ENCODE measurements at regions of chr13 and their contacts with region 1.

Region 1: GRCh38 chr13:99656092-99656745 is 154.9 kb downstream of the TM9SF2 start:
- DNase-seq: peak; percentile 74
- H3K4me3 Mint-ChIP-seq: peak overlapping the region; percentile 57
- H3K27ac Mint-ChIP-seq: peak overlapping the region; percentile 9
- H3K4me1 Mint-ChIP-seq: peaks cover 44% of the 10 kb centered on the region
- H3K27me3 Mint-ChIP-seq: peaks cover 23% of the 10 kb centered on the region

Region 2: DNA sequence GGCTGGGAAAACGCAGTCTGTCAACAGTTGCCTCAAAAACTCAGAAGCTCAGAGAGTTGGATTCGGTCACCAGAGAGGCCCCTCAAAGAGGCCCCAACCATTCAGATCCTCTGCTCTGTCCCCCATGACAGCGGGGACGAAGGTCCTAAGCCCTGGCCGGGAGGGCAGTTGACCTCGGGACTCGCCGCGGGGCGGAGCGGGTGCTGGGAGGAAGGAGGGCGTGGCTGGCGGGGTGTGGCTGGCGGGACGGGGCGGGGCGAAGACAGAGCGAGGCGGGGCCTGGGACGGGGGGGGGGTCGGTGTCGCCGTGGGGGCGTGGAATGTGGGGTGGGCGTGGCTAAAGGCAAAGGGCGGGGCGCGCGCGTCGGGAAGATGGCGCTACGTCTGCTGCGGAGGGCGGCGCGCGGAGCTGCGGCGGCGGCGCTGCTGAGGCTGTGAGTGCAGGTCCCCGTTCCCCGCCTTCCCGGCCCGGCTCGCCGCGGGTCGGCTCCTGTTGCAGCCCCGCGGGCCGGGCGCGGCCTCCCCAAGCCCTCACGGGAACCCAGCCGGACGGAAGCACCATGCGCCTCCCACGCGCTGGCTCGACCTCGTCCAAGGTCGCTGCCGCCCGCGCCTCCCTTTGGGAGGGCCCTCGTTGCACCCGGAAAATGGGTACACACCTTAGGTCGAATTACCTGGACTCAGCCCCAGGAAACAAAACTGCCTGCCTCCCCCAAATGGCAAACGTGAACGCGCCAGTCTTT is 49.7 kb before region 1 on chr13:
- intact Hi-C with region 1: loop called (anchors 1 kb)
- DNase-seq: peak; percentile 82
- H3K4me3 Mint-ChIP-seq: peak within 1 kb of the TSS; percentile 89
- H3K27ac Mint-ChIP-seq: peak within 1 kb of the TSS; percentile 81
- H3K4me1 Mint-ChIP-seq: peaks cover 29% of the 10 kb centered on the region
- H3K27me3 Mint-ChIP-seq: peaks cover 4% of the 10 kb centered on the region

Region 3: DNA sequence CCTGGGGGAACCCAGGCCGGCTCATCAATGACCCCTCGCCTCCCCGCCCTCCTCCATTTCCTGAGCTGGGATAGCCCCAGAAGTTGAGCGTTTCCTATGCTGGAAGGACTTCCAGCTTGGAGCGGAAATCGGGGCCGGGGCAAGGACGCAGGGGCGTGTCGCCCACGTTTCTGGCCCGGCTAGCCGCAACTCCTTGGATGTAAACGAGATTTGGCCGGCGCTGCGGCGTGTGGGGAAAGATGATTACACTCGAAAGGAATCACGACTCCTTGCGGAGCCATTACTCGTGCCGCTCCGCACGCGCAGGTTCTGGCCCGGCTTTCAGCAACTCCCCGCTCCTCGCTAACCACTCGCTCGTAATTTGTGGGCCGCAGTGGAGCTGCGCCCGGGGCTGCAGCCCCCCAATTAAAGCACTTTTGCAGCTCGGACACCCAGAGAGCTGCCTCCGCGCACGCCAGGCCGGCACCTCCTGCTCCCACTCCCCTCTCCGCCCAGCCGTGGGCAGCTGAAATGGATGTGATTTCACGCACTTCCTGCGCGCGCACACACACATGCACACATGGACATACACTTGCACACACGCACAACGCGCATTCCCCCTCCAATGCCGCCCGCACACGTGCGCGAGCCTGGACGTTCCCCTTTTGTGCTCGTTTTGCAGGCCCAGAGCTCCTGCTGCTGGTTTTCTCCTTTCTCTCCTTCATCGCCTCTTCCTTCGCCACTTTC is 299.7 kb after region 1 on chr13:
- intact Hi-C with region 1: loop called (anchors 5 kb)
- DNase-seq: no peak
- H3K4me3 Mint-ChIP-seq: no peak overlapping the region
- H3K27ac Mint-ChIP-seq: peak overlapping the region; percentile 72
- H3K4me1 Mint-ChIP-seq: peaks cover 5% of the 10 kb centered on the region
- H3K27me3 Mint-ChIP-seq: peaks cover 78% of the 10 kb centered on the region

Region 4: DNA sequence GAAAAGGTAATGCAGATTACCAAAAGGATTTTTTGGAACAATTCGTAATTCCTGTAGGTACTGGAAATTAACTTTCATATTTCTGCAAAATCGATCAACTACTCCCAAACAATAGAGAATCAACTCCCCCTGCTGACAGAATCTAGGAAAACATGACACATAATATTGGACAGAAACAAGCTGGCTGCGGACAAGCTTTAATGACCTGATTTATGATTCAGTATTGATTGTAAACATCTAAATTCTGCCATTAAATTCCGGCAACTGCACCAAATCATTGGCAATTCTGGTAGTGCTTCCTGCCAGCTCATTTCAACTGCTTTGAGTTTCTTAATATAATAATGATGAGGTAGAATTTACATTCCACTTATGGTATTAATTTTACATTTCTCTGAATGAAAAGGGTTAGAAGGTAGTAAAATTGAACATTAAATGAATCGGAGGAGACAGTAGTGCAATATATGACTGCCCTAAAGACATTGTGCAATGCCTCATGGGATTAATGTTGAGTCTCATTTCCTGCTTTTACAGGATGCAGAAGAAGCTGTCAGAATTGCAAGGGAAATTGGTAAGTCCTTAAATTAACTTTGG is 579.2 kb after region 1 on chr13:
- intact Hi-C with region 1: loop called (anchors 1 kb)
- DNase-seq: no peak
- H3K4me3 Mint-ChIP-seq: no peak overlapping the region
- H3K27ac Mint-ChIP-seq: no peak overlapping the region
- H3K4me1 Mint-ChIP-seq: peaks cover 15% of the 10 kb centered on the region
- H3K27me3 Mint-ChIP-seq: no peaks in the 10 kb centered on the region

Region 5: DNA sequence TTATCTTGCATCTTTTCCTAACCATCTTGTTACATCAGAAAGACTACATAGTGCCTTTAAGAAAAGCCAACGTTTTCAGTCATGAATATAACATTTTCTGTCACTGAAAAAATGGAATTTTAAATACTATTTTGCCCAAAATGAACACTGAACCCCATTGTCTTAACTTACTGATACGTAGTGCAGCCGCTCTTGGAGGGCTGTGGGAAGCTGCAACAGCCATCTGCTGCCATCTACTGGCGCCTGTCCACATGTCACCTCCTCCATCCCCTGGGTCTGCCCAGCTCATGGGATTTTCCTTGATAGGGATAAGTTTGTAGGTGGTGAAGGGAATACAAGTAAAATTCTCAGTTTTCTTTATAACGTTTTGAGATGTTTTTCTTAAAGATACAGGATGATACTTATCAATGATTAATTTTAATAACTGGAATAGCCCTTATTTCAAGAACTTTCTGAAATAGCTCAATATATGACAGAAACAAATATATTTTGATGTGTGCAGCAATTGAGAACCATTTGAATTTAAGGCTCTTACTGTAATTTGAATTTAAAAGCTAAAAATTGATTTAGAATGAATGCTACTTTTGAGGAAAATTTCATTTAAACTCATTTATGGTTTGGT is 858.7 kb after region 1 on chr13:
- intact Hi-C with region 1: loop called (anchors 1 kb)
- DNase-seq: peak; percentile 52
- H3K4me3 Mint-ChIP-seq: no peak overlapping the region
- H3K27ac Mint-ChIP-seq: no peak overlapping the region
- H3K4me1 Mint-ChIP-seq: peaks cover 54% of the 10 kb centered on the region
- H3K27me3 Mint-ChIP-seq: peaks cover 7% of the 10 kb centered on the region

Region 6: GRCh38 chr13:100725472-100725871 is 1069.3 kb after region 1 on chr13:
- intact Hi-C with region 1: no loop called
- DNase-seq: no peak
- H3K4me3 Mint-ChIP-seq: no peak overlapping the region
- H3K27ac Mint-ChIP-seq: no peak overlapping the region
- H3K4me1 Mint-ChIP-seq: no peaks in the 10 kb centered on the region
- H3K27me3 Mint-ChIP-seq: peaks cover 10% of the 10 kb centered on the region

Region 7: DNA sequence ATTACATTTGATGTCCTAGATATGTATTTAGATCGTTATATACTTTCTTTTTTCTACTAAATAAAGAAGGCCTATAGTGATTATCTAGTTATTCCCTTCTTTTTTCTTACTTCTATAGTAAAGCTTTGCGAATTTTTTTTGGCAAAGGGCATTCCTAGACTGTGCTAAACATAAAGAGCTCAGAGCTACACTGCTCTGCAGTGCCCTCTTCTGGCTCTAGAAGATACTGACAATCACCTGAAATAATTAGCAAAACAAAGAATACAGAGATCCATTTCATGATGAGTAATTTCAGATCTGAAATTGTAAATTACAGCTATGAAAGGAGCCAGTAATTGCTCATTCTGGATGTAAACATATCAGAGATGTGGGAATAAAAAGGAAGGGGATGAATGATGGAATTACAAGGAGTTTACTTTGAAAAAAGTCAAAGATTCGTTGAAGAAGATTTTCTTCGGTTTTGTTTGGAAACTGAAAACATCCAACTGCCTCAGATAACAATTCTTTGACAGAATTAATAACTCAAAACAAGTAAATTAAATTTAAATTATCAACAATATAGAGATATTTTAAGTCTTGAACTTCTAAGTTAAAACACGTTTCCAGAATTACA is 1471.6 kb after region 1 on chr13:
- intact Hi-C with region 1: loop called (anchors 1 kb)
- DNase-seq: no peak
- H3K4me3 Mint-ChIP-seq: no peak overlapping the region
- H3K27ac Mint-ChIP-seq: no peak overlapping the region
- H3K4me1 Mint-ChIP-seq: peaks cover 5% of the 10 kb centered on the region
- H3K27me3 Mint-ChIP-seq: peaks cover 11% of the 10 kb centered on the region